ENCODE measurements at regions of chr2 and their contacts with region 1.

Region 1: GRCh38 chr2:157990173-157990572 is 111.5 kb upstream of the UPP2 start:
- DNase-seq: no peak
- ATAC-seq: no peak
- H3K4me3 ChIP-seq: no peak overlapping the region
- H3K27ac ChIP-seq: no peak overlapping the region
- H3K4me1 ChIP-seq: no peaks in the 10 kb centered on the region
- H3K27me3 ChIP-seq: no peaks in the 10 kb centered on the region
- CTCF ChIP-seq: no peak

Region 2: GRCh38 chr2:157875641-157876065 is 114.5 kb before region 1 on chr2:
- intact Hi-C with region 1: no loop called
- DNase-seq: peak in 3 of 6 donors; percentile 74 to 87 (median 75)
- ATAC-seq: peak; percentile 46 to 59 (median 50)
- H3K4me3 ChIP-seq: peak overlapping the region; percentile 67 to 88 (median 77)
- H3K27ac ChIP-seq: peak overlapping the region; percentile 96 to 99 (median 97)
- H3K4me1 ChIP-seq: peaks cover 3 to 41% (median 12%) of the 10 kb centered on the region in 3 donors
- H3K27me3 ChIP-seq: no peaks in the 10 kb centered on the region
- CTCF ChIP-seq: no peak

Region 3: DNA sequence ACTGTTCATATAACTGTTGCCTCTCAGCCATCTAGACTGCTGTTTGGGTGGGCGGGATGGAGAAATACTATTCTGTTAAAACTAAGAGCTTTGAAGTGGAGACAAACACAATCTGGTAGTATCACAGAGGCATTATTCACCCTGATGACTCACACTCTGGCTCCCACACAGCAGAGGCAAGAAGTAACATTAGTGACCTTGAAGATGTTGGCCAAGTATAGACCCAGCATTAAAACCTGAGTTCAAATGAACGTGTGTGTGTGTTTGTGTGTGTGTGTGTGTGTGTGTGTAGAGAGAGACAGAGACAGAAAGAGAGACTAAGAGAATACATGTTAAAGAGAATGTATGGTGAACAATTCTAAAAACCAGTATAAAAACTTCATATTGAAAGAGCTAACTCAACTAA is 91.6 kb before region 1 on chr2:
- intact Hi-C with region 1: loop called in 1 of 3 experiments (anchors 10 kb)
- DNase-seq: peak in 4 of 6 donors; percentile 42 to 69 (median 50)
- ATAC-seq: peak; percentile 92 to 97 (median 96)
- H3K4me3 ChIP-seq: no peak overlapping the region
- H3K27ac ChIP-seq: no peak overlapping the region
- H3K4me1 ChIP-seq: peaks cover 0 to 5% (median 0%) of the 10 kb centered on the region in 3 donors
- H3K27me3 ChIP-seq: no peaks in the 10 kb centered on the region
- CTCF ChIP-seq: no peak

Region 4: GRCh38 chr2:158239271-158239670 is 249.1 kb after region 1 on chr2:
- intact Hi-C with region 1: no loop called
- DNase-seq: no peak
- ATAC-seq: no peak
- H3K4me3 ChIP-seq: no peak overlapping the region
- H3K27ac ChIP-seq: no peak overlapping the region
- H3K4me1 ChIP-seq: no peaks in the 10 kb centered on the region
- H3K27me3 ChIP-seq: no peaks in the 10 kb centered on the region
- CTCF ChIP-seq: no peak